Mammary epithelial cell (primary cell): ENCODE measurements at regions of chr21 and their contacts with region 1.

Region 1: DNA sequence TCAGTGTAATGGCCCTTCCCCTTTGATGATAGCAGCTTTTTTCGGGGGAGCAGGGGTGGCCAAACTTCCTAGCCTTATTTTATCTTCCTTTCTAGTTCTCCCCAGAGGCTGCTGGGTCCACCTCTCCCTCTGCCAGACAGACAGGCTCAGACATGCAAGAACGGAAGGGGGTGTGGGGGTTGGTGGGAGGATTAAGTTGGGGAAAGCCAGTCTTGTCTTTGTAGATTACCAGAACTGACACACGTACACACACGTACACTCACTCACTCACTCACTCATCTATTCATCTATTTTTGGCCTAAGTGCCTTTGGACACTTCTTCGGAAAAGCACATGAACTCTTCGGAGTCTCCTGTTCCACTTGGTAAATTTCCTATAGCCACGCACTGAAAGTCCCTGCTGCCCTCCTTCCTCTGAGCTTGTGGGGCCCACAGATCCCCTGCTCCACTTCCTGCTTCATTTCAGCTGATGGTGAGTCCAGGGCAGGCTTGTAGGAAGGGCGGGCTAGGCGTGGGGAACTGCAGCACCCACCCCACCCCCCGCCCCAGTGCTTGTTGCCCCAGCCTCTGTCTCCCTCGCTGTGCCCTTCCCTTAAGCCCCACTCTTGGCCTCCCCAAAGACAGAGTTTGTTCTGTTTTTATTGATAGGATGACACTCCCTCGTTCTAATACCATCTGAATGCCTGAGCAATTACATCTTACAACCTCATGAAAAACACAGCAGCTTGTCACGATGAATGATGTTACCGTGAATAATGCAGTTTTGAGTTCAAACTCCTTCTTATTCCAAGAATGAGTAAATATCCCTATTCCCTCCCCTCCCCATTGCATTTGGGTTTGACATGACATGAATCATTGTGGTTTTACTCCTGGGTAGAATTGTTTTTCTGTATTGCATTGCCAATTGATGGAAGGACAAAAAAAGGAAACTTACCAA is 60.7 kb upstream of the ATP5PO start:
- DNase-seq: peak; percentile 97
- H3K4me3 ChIP-seq: peak overlapping the region in 2 of 3 experiments; percentile 7
- H3K27ac ChIP-seq: peak overlapping the region; percentile 98
- H3K4me1 ChIP-seq: peaks cover 37% of the 10 kb centered on the region
- H3K27me3 ChIP-seq: no peaks in the 10 kb centered on the region
- CTCF ChIP-seq: no peak

Region 2: GRCh38 chr21:33924079-33924765 is 52.1 kb before region 1 on chr21:
- CTCF ChIA-PET with region 1: no interaction called
- dilution Hi-C with region 1: no loop called
- in situ Hi-C with region 1: no loop called
- intact Hi-C with region 1: loop called (anchors 2 kb)
- DNase-seq: peak; percentile 52
- H3K4me3 ChIP-seq: no peak overlapping the region
- H3K27ac ChIP-seq: no peak overlapping the region
- H3K4me1 ChIP-seq: peaks cover 9% of the 10 kb centered on the region
- H3K27me3 ChIP-seq: no peaks in the 10 kb centered on the region
- CTCF ChIP-seq: peak; percentile 92 to 95

Region 3: GRCh38 chr21:33947451-33948095 is 28.8 kb before region 1 on chr21:
- CTCF ChIA-PET with region 1: no interaction called
- dilution Hi-C with region 1: loop called (anchors 5 kb)
- in situ Hi-C with region 1: no loop called
- intact Hi-C with region 1: loop called (anchors 1 kb)
- DNase-seq: peak; percentile 98
- H3K4me3 ChIP-seq: peak overlapping the region; percentile 30 to 39 (median 37)
- H3K27ac ChIP-seq: peak overlapping the region; percentile 93
- H3K4me1 ChIP-seq: peaks cover 25% of the 10 kb centered on the region
- H3K27me3 ChIP-seq: no peaks in the 10 kb centered on the region
- CTCF ChIP-seq: no peak

Region 4: DNA sequence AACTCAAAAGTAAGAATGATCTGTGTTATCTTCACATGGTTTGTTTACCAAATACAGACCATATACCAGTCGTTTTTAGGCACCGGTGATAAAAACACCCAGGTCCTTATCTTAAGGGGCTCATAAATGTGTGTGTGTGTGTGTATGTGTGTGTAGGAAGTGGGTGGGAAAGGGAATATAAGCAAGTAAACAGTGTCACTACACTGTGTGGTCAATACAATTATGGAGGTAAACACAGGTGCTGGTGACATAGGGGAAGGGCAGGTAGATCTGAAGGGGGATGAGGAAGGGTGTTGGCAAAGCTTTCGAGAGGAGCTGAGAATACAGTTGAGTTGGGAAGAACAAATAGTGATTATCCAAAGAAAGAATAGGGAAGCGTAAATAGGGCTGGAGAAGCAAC is 77.9 kb after region 1 on chr21:
- CTCF ChIA-PET with region 1: no interaction called
- dilution Hi-C with region 1: no loop called
- in situ Hi-C with region 1: no loop called
- intact Hi-C with region 1: loop called (anchors 5 kb)
- DNase-seq: no peak
- H3K4me3 ChIP-seq: no peak overlapping the region
- H3K27ac ChIP-seq: no peak overlapping the region
- H3K4me1 ChIP-seq: no peaks in the 10 kb centered on the region
- H3K27me3 ChIP-seq: no peaks in the 10 kb centered on the region
- CTCF ChIP-seq: no peak

Region 5: GRCh38 chr21:34202553-34203372 is 226.4 kb after region 1 on chr21:
- CTCF ChIA-PET with region 1: no interaction called
- dilution Hi-C with region 1: no loop called
- in situ Hi-C with region 1: no loop called
- intact Hi-C with region 1: loop called (anchors 5 kb)
- DNase-seq: no peak
- H3K4me3 ChIP-seq: no peak overlapping the region
- H3K27ac ChIP-seq: no peak overlapping the region
- H3K4me1 ChIP-seq: peaks cover 4% of the 10 kb centered on the region
- H3K27me3 ChIP-seq: no peaks in the 10 kb centered on the region
- CTCF ChIP-seq: no peak